Activated CD8-positive, alpha-beta T cell treated with anti-CD3 and anti-CD28 coated beads, Interleukin-2, amount 10 ng/mL, durations not matched to agents 7 days and 5 days (primary cell): ENCODE measurements at regions of chr2 and their contacts with region 1.

Region 1: DNA sequence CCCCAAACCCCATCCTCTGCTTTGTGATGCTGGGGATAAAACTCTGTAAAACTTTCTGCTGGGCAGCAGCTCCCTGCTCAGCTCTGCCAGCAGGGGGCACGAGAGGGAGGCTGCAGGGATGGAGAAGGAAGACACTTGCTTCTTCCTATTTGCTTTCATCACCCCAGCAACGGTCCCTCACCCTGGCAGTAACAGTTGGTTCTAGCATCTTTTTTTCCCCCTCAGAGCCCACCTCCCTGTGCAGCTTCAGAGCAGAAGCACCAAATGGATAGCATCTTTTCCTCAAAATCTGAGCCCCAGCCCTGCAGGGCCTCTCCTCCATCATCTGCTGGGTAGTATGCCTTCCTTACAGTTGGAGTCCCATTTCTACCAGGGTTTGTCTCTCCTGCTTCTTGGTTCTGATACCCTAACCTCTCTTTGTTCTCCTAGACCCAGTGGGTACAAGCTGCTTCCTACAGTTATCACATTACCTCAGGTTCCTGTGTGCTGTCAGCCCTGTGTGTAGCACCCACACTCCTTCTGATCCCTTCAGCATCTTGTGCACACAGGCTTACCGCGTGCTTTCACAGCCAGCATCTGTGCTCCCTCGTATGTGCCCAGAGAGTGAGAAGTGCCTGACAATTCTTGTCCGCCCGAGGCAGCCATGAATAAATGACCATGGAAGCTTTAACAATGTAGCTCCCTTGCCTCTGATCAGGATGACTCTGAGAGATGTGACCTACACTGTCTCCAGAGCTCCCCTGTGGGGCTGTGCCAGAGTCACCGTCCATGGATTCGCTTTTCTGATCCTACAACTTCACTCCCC is 14.5 kb downstream of the CKAP2L start:
- DNase-seq: peak; percentile 87
- ATAC-seq: peak; percentile 93
- H3K4me3 Mint-ChIP-seq: no peak overlapping the region
- H3K27ac Mint-ChIP-seq: peak overlapping the region; percentile 28
- H3K4me1 Mint-ChIP-seq: peaks cover 37% of the 10 kb centered on the region
- H3K27me3 Mint-ChIP-seq: no peaks in the 10 kb centered on the region

Region 2: GRCh38 chr2:112737542-112738232 is 12.3 kb before region 1 on chr2:
- CTCF ChIA-PET with region 1: interaction called, 23 read pairs
- POLR2A ChIA-PET with region 1: no interaction called
- DNase-seq: no peak
- ATAC-seq: no peak
- H3K4me3 Mint-ChIP-seq: no peak overlapping the region
- H3K27ac Mint-ChIP-seq: no peak overlapping the region
- H3K4me1 Mint-ChIP-seq: no peaks in the 10 kb centered on the region
- H3K27me3 Mint-ChIP-seq: no peaks in the 10 kb centered on the region

Region 3: DNA sequence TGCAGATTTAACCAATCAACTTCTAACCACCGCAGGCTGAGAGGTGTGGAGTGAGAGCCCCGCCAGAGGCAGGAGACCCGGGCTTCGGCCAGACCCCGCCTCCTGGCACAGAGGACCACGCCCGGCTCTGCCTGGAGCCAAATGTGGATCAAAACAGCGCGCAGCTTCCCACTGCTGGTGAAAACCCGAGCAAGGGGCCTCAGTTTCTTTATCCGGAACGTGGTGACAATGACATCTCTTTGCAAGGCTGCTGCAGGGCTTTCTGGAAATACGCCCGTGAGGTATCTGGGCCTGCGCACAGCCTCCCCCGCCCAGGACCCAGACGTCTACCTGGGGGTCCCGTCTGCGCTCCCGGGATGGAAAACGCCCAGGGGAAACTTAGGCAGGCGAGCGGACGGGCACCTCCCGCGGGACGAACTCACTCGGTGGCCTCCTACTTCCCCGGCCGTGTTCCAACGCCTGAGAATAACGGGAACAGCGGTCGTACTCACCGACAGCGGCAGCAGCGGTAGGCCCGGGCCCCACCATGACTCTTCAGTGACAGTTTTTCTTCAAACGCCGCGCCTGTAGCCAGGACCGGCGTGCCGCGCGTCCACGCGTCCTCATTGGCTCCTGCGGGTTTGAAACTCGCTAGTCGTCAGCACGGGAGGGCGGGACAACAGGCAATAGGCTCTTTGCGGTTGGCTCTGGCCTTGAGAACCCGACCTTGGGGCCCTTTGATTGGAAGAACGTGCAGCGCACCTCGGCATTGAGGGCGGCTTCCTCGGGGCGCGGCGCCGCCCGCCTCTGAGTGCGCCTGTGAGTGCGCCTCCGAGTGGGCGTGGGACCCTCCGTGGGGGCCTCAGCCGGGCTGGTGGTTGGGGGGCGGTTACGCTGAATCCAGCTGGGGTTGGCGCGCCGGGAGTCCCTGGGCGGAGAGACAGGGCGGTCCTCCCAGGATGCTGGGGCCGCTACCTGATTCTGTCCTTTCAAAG is 14.4 kb after region 1 on chr2 and contains the start of gene CKAP2L:
- CTCF ChIA-PET with region 1: interaction called, 27 read pairs
- POLR2A ChIA-PET with region 1: interaction called, 6 read pairs
- DNase-seq: peak; percentile 99
- ATAC-seq: peak; percentile 98
- H3K4me3 Mint-ChIP-seq: peak within 1 kb of the TSS; percentile 99
- H3K27ac Mint-ChIP-seq: peak within 1 kb of the TSS; percentile 98
- H3K4me1 Mint-ChIP-seq: peaks cover 52% of the 10 kb centered on the region
- H3K27me3 Mint-ChIP-seq: no peaks in the 10 kb centered on the region
- total RNA-seq, gene CKAP2L: 59.3 to 63.4 TPM

Region 4: DNA sequence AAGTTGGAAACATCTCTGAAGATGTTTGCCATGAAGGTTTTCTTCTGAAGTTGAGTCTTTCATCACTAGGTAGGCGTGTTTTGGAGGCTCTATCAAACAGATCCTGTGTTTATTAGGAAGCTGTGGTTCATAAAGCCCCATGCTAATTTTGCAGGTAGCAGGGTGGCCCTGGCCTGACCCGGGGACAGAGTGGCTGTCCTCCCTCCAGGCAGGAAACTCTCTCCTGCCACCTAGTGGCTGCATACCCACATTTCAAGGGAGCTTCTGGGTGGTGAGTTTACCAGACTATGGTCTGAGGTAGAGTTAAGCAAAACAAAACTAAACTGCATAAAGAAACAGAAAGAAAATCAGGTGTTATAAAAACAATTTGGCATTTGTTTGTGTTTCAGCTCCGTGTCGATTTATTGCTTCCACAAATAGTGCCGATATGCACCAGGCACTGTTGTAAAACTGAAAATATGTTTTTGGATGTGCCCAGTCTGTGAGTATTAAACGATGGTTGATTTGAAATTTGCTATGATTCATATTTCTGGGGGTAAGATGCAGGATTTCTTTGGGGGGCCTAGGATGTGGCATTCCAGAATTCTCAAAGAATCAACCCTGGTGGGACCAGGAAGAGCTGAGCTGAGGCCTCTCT is 135.0 kb after region 1 on chr2:
- CTCF ChIA-PET with region 1: interaction called, 82 read pairs
- POLR2A ChIA-PET with region 1: interaction called, 7 read pairs
- DNase-seq: peak; percentile 74
- ATAC-seq: peak; percentile 77
- H3K4me3 Mint-ChIP-seq: no peak overlapping the region
- H3K27ac Mint-ChIP-seq: no peak overlapping the region
- H3K4me1 Mint-ChIP-seq: peaks cover 27% of the 10 kb centered on the region
- H3K27me3 Mint-ChIP-seq: peaks cover 9% of the 10 kb centered on the region

Region 5: GRCh38 chr2:112920923-112921532 is 171.1 kb after region 1 on chr2:
- CTCF ChIA-PET with region 1: interaction called, 18 read pairs
- POLR2A ChIA-PET with region 1: no interaction called
- DNase-seq: peak; percentile 24
- ATAC-seq: peak; percentile 49
- H3K4me3 Mint-ChIP-seq: no peak overlapping the region
- H3K27ac Mint-ChIP-seq: peak overlapping the region; percentile 41
- H3K4me1 Mint-ChIP-seq: peaks cover 8% of the 10 kb centered on the region
- H3K27me3 Mint-ChIP-seq: peaks cover 2% of the 10 kb centered on the region

Region 6: GRCh38 chr2:112947374-112947773 is 197.4 kb after region 1 on chr2:
- CTCF ChIA-PET with region 1: interaction called, 242 read pairs
- POLR2A ChIA-PET with region 1: interaction called, 3 read pairs
- DNase-seq: no peak
- ATAC-seq: no peak
- H3K4me3 Mint-ChIP-seq: no peak overlapping the region
- H3K27ac Mint-ChIP-seq: no peak overlapping the region
- H3K4me1 Mint-ChIP-seq: no peaks in the 10 kb centered on the region
- H3K27me3 Mint-ChIP-seq: peaks cover 19% of the 10 kb centered on the region

Region 7: GRCh38 chr2:112958428-112959108 is 208.6 kb after region 1 on chr2:
- CTCF ChIA-PET with region 1: interaction called, 13 read pairs
- POLR2A ChIA-PET with region 1: no interaction called
- DNase-seq: peak; percentile 57
- ATAC-seq: peak; percentile 86
- H3K4me3 Mint-ChIP-seq: no peak overlapping the region
- H3K27ac Mint-ChIP-seq: no peak overlapping the region
- H3K4me1 Mint-ChIP-seq: no peaks in the 10 kb centered on the region
- H3K27me3 Mint-ChIP-seq: peaks cover 3% of the 10 kb centered on the region